Colonic mucosa (tissue), 4 donors: ENCODE measurements at regions of chr7 and their contacts with region 1.

Region 1: DNA sequence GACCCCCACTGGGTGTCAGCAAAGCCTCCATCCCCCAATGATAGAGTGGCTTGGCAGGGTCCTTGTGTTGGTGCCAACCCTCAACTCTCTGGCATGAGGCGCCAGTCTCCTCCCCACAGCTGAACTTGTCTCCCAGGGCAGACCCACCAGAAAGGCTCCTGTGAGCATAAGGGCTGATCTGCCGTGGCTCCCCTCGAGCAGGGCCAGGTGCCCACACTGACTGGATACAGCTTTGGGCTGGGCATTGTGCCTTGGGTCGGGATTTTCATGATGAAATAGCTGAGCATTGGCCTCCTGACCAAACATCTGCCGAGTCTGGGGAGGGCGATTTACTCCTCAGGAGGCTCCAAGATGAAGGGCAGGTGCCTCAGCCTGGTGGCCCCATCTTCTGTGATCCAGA is 68.1 kb upstream of the NPTX2 start:
- DNase-seq: no peak
- H3K4me3 ChIP-seq: no peak overlapping the region
- H3K27ac ChIP-seq: no peak overlapping the region
- H3K4me1 ChIP-seq: no peaks in the 10 kb centered on the region
- H3K27me3 ChIP-seq: no peaks in the 10 kb centered on the region
- CTCF ChIP-seq: no peak

Region 2: GRCh38 chr7:98300595-98301372 is 248.2 kb before region 1 on chr7:
- intact Hi-C with region 1: loop called (anchors 10 kb)
- DNase-seq: no peak
- H3K4me3 ChIP-seq: no peak overlapping the region
- H3K27ac ChIP-seq: no peak overlapping the region
- H3K4me1 ChIP-seq: no peaks in the 10 kb centered on the region
- H3K27me3 ChIP-seq: no peaks in the 10 kb centered on the region
- CTCF ChIP-seq: no peak

Region 3: GRCh38 chr7:98493030-98493778 is 55.8 kb before region 1 on chr7:
- intact Hi-C with region 1: no loop called
- DNase-seq: no peak
- H3K4me3 ChIP-seq: no peak overlapping the region
- H3K27ac ChIP-seq: no peak overlapping the region
- H3K4me1 ChIP-seq: no peaks in the 10 kb centered on the region
- H3K27me3 ChIP-seq: no peaks in the 10 kb centered on the region
- CTCF ChIP-seq: no peak